Astrocyte of the cerebellum (primary cell): ENCODE measurements at regions of chr3 and their contacts with region 1.

Region 1: DNA sequence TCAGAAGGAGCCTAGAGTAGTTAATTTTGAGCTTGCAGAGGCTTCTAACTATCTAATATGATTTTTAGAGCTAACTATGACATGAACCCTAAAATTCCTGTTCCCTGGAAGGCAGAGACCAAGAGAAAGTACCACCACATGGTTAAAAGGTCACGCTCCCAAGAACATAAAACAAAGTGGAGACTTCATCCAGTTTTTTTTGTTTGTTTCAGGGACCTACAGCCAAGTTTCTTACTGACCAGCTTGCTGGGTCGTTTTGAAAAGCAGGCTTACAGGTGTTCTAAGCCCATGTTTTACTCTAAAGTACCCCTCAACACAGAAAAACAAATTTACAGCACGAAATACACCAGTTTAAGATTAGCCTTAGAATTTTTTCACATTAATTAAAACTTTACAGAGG is 39.6 kb upstream of the SKIL start:
- DNase-seq: no peak
- H3K4me3 ChIP-seq: no peak overlapping the region
- CTCF ChIP-seq: no peak

Region 2: GRCh38 chr3:170267793-170268192 is 50.2 kb before region 1 on chr3:
- in situ Hi-C with region 1: loop called (anchors 5 kb)
- DNase-seq: no peak
- H3K4me3 ChIP-seq: no peak overlapping the region
- CTCF ChIP-seq: no peak

Region 3: DNA sequence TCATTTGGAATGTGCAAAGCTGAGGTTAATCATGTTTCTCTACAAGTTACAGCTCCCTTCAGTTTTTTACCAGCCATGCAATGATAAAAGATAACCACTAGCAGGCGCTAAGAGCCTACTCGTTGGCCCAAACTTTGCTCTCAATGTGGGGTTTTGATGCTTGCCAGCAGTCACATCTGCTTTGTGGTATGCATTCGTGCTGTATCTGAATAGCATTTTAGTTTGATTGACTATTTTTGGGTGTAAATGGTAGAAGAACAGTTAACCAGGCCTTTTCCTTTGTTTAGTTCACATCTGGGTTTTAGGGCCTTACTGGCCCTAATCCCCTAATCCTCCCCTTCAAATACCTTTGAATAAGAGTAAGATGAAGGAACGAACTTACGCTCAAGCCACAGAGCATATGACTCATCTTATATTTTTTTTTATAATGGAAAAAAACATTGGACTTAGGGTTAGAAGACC is 96.3 kb after region 1 on chr3:
- in situ Hi-C with region 1: no loop called
- DNase-seq: peak; percentile 87
- H3K4me3 ChIP-seq: no peak overlapping the region
- CTCF ChIP-seq: peak; percentile 99